ENCODE measurements at regions of chr16 and their contacts with region 1.

Region 1: GRCh38 chr16:27235055-27235937 is 32.0 kb downstream of the KDM8 start:
- H3K4me3 ChIP-seq: no peak overlapping the region
- H3K27ac ChIP-seq: no peak overlapping the region
- H3K4me1 ChIP-seq: peaks cover 4% of the 10 kb centered on the region; the same call in 1 of the 2 replicates
- CTCF ChIP-seq: peak; percentile 40

Region 2: GRCh38 chr16:27107185-27107592 is 128.1 kb before region 1 on chr16:
- CTCF ChIA-PET with region 1: no interaction called
- POLR2A ChIA-PET with region 1: no interaction called
- H3K4me3 ChIP-seq: no peak overlapping the region
- H3K27ac ChIP-seq: no peak overlapping the region
- H3K4me1 ChIP-seq: no peaks in the 10 kb centered on the region
- CTCF ChIP-seq: no peak

Region 3: GRCh38 chr16:27222249-27223225 is 12.8 kb before region 1 on chr16:
- CTCF ChIA-PET with region 1: interaction called, 10 read pairs
- POLR2A ChIA-PET with region 1: no interaction called
- H3K4me3 ChIP-seq: no peak overlapping the region
- H3K27ac ChIP-seq: no peak overlapping the region
- H3K4me1 ChIP-seq: no peaks in the 10 kb centered on the region
- CTCF ChIP-seq: no peak

Region 4: GRCh38 chr16:27332105-27332504 is 96.8 kb after region 1 on chr16:
- CTCF ChIA-PET with region 1: no interaction called
- POLR2A ChIA-PET with region 1: no interaction called
- H3K4me3 ChIP-seq: no peak overlapping the region
- H3K27ac ChIP-seq: no peak overlapping the region
- H3K4me1 ChIP-seq: no peaks in the 10 kb centered on the region
- CTCF ChIP-seq: no peak

Region 5: GRCh38 chr16:27367461-27368357 is 132.4 kb after region 1 on chr16:
- CTCF ChIA-PET with region 1: interaction called, 83 read pairs
- POLR2A ChIA-PET with region 1: interaction called, 3 read pairs
- H3K4me3 ChIP-seq: no peak overlapping the region
- H3K27ac ChIP-seq: no peak overlapping the region
- H3K4me1 ChIP-seq: no peaks in the 10 kb centered on the region; the same call in 1 of the 2 replicates
- CTCF ChIP-seq: peak; percentile 67

Region 6: DNA sequence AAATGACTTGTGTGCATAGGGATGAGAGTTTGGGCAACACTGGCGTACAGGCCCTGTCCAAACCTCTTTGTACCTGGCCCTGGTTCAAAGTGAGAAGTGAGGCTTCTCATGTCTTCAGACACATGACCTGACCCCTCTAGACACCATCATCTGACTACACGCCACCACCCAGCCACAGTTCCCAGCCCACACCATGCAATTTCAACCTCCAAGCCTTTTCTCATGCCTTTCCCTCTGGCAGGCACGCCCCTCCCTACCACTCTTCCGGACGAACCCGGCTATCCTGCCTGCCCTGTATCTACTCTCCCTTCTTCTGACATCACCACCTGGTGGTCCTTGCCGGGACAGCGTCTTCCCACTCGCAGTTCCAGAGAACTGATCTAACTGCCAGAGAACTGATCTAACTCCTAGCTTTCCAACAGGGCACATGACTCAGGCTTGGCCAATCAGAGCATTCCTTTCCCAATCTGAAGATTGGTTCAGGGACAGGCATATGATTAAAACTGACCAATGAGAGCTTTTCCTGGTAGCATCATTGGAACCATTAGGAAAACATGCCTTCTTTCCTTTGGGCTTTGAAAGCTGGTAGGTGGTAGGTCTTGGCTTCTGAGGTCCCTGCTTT is 139.6 kb after region 1 on chr16:
- CTCF ChIA-PET with region 1: interaction called, 83 read pairs
- POLR2A ChIA-PET with region 1: no interaction called
- H3K4me3 ChIP-seq: no peak overlapping the region
- H3K27ac ChIP-seq: no peak overlapping the region
- H3K4me1 ChIP-seq: no peaks in the 10 kb centered on the region
- CTCF ChIP-seq: peak; percentile 54; the same call in 1 of the 2 replicates